A549 (cell line): ENCODE measurements at regions of chr1 and their contacts with region 1.

Region 1: DNA sequence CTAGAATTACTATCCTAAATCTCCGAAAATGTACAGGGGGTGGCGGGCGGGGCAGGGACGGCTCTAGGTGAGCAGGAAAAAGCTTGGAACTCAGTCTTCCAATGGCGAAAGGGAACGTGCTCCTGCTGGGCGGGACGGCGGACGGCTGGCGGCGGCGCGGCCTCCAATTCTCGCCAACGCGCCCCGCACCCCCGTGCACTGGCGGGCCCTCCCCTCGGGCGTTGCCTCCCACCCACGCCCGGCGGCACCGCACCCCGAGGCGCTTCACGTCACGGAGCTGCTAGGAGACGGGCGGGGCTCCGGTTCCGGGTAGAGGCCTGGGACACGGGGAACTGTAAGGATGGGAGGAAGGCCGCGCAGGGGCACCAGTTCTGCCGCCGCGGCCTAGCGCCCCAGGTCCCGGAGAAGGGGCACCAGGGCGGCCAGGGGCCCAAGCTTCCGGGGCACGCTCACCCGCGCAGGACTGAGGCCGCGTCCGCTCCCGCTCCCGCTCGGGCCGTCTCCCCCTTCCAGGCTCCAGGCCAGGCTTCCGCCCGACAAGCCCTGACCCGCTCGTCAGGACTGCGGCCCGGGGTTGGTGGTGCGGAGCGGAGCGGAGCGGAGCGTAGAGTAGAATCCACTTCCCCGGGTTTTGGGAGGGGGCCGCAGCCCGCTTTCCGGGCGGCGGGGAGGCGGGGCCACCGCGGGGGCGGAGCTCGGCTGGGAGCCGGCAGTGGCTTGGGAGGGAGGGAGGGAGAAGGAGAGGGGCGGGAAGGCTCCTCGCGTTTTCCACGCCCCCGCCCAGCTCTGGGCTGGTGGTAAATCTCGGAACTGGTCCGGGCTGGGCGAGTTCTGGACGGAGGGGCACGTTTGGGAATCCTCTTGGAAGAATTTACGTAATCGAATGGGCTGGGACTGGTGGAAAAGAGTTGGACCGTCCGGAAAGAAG is at the start of gene DDX59:
- DNase-seq: peak; percentile 95 to 98
- ATAC-seq: peak; percentile 89 to 90
- H3K4me3 ChIP-seq: peak within 1 kb of the TSS; percentile 60
- H3K27ac ChIP-seq: peak within 1 kb of the TSS; percentile 98 to 99
- H3K4me1 ChIP-seq: peaks cover 14% of the 10 kb centered on the region
- CTCF ChIP-seq: no peak
- EP300 ChIP-seq: peak in 1 of 2 experiments; percentile 43; a peak in 1 of 5 replicates
- POLR2A ChIP-seq: peak; percentile 46; the same call in 1 of the 2 replicates
- RAD21 ChIP-seq: peak in 1 of 2 experiments; percentile 11; a peak in 1 of 5 replicates
- polyA plus RNA-seq, gene DDX59: 28.7 and 42.9 TPM in 2 replicates

Region 2: DNA sequence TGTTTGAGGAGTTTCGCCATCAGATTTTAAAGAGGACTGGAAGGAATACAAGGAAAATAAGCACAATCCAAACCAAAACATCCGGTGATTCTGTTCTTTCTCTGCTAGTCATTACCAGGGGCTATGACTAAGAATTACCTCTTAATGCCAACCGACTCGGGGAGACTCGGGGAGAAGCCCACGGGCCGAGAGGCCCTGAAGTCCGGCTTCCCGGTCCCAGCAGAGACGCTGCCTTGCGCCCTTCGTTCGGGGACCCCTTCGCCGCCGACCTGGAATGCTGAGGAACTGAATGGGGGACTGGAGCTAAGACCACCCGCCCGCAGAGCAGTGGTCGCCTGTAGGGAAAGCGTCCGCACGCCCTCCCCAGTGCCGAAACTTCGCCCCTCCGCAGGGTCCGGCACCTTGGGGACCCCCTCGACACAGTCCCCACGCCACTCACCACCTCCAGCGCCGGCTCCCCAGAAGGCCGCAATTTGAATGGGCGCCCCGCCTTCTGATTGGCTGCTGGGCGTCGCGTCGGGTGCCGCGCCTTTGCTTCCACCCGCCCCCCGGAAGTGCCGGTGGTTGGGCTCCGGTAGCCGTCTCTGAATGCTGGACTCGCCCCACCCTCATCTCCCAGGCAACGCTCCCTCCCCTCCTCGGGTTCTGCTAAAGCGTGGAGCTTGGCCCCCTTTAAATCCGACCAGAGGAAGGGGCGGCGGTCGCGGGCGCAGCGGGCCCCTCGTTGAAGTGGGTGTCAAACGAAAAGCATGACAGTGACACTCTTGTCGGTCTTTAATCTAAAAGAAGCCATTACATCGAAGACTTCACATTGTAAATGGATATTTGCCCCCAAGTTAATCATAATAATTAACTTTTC is 49.1 kb before region 1 on chr1 and contains the start of gene KIF14:
- CTCF ChIA-PET with region 1: interaction called, 11 read pairs
- POLR2A ChIA-PET with region 1: interaction called, 15 read pairs
- DNase-seq: peak; percentile 93 to 97
- ATAC-seq: peak; percentile 99 to 100
- H3K4me3 ChIP-seq: peak within 1 kb of the TSS; percentile 86
- H3K27ac ChIP-seq: peak within 1 kb of the TSS; percentile 79 to 91
- H3K4me1 ChIP-seq: peaks cover 12% of the 10 kb centered on the region; the same call in 2 of the 3 replicates
- CTCF ChIP-seq: no peak
- EP300 ChIP-seq: no peak
- POLR2A ChIP-seq: no peak
- RAD21 ChIP-seq: no peak
- polyA plus RNA-seq, gene KIF14: 13.5 and 20.4 TPM in 2 replicates

Region 3: GRCh38 chr1:200659269-200659668 is 10.3 kb before region 1 on chr1:
- CTCF ChIA-PET with region 1: no interaction called
- POLR2A ChIA-PET with region 1: interaction called, 12 read pairs
- DNase-seq: no peak
- ATAC-seq: peak; percentile 8 to 70; a peak in 4 of 6 replicates
- H3K4me3 ChIP-seq: no peak overlapping the region
- H3K27ac ChIP-seq: 0 out of 6 replicates have a peak overlapping the region, but pooled peaks of 1 of the 2 experiments have one; percentile 6
- H3K4me1 ChIP-seq: peaks cover 10% of the 10 kb centered on the region
- CTCF ChIP-seq: no peak
- EP300 ChIP-seq: no peak
- POLR2A ChIP-seq: no peak
- RAD21 ChIP-seq: no peak

Region 4: GRCh38 chr1:200729863-200730262 is 60.3 kb after region 1 on chr1:
- CTCF ChIA-PET with region 1: no interaction called
- POLR2A ChIA-PET with region 1: interaction called, 10 read pairs
- DNase-seq: no peak
- ATAC-seq: no peak
- H3K4me3 ChIP-seq: no peak overlapping the region
- H3K27ac ChIP-seq: no peak overlapping the region
- H3K4me1 ChIP-seq: no peaks in the 10 kb centered on the region
- CTCF ChIP-seq: no peak
- EP300 ChIP-seq: no peak
- POLR2A ChIP-seq: no peak
- RAD21 ChIP-seq: no peak

Region 5: DNA sequence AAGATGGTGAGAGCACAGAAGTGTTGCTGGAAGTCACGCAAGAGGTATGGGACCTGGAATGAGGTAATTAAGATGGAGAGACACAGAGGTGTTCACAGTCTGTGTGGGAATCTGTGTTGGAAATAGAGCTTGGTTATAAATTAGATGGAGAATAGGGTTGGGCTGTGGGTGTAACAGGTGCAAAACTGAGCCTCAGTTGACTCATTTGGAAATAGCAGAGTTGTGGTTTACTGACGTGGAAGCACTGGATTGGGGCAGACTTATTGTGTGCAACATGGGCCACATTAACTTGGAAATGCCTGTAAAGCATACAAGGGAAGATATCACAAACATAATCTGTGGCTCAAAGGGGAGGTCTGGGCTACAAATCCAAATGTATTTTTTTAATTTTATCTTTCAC is 82.1 kb after region 1 on chr1:
- CTCF ChIA-PET with region 1: no interaction called
- POLR2A ChIA-PET with region 1: interaction called, 10 read pairs
- DNase-seq: no peak
- ATAC-seq: no peak
- H3K4me3 ChIP-seq: no peak overlapping the region
- H3K27ac ChIP-seq: no peak overlapping the region
- H3K4me1 ChIP-seq: peaks cover 11% of the 10 kb centered on the region
- CTCF ChIP-seq: no peak
- EP300 ChIP-seq: no peak
- POLR2A ChIP-seq: no peak
- RAD21 ChIP-seq: no peak

Region 6: DNA sequence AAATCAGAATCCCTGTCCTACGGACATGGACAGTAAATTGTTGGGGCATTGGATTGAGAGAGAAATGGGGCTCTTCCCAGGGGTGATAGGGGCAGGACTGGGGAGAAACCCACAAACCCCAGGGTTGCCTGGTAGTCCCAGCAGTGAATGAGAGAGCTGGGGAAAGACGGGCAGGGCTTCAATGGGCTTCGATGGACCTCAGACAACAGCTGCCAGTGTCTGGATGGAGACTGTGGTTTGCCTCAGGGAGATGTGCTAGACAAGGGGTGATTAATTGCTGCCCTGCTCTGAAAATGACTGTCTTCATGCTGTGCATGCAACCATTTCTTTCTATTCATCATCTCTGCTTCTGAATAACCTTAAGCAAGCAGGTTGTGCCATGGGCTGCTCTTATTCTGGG is 210.6 kb after region 1 on chr1:
- CTCF ChIA-PET with region 1: no interaction called
- POLR2A ChIA-PET with region 1: no interaction called
- DNase-seq: no peak
- ATAC-seq: no peak
- H3K4me3 ChIP-seq: no peak overlapping the region
- H3K27ac ChIP-seq: no peak overlapping the region
- H3K4me1 ChIP-seq: peaks cover 6% of the 10 kb centered on the region; the same call in 2 of the 3 replicates
- CTCF ChIP-seq: no peak
- EP300 ChIP-seq: no peak
- POLR2A ChIP-seq: no peak
- RAD21 ChIP-seq: no peak